ENCODE measurements at regions of chr5 and their contacts with region 1.

Region 1: GRCh38 chr5:82278095-82278918 is at the start of gene RPS23:
- DNase-seq: peak; percentile 92
- H3K4me3 ChIP-seq: peak within 1 kb of the TSS; percentile 74 to 99 (median 96)
- H3K27ac ChIP-seq: peak within 1 kb of the TSS; percentile 91
- H3K4me1 ChIP-seq: peaks cover 11% of the 10 kb centered on the region
- H3K27me3 ChIP-seq: no peaks in the 10 kb centered on the region
- CTCF ChIP-seq: no peak
- POLR2A ChIP-seq: peak; percentile 91
- total RNA-seq, gene RPS23: 1,940 and 2,037 TPM in 2 replicates

Region 2: GRCh38 chr5:81971712-81972495 is 306.4 kb before region 1 on chr5 and contains the start of gene ATG10:
- CTCF ChIA-PET with region 1: no interaction called
- POLR2A ChIA-PET with region 1: interaction called, 3 read pairs
- dilution Hi-C with region 1: no loop called
- intact Hi-C with region 1: loop called (anchors 1 kb)
- DNase-seq: peak; percentile 96
- H3K4me3 ChIP-seq: peak within 1 kb of the TSS; percentile 64 to 89 (median 71)
- H3K27ac ChIP-seq: peak within 1 kb of the TSS; percentile 71
- H3K4me1 ChIP-seq: no peaks in the 10 kb centered on the region
- H3K27me3 ChIP-seq: no peaks in the 10 kb centered on the region
- CTCF ChIP-seq: no peak
- POLR2A ChIP-seq: peak; percentile 89
- total RNA-seq, gene ATG10: 3.9 and 5.9 TPM in 2 replicates

Measured in endothelial cell of umbilical vein (primary cell).